CD4-positive, alpha-beta memory T cell (primary cell): ENCODE measurements at regions of chr1 and their contacts with region 1.

Region 1: DNA sequence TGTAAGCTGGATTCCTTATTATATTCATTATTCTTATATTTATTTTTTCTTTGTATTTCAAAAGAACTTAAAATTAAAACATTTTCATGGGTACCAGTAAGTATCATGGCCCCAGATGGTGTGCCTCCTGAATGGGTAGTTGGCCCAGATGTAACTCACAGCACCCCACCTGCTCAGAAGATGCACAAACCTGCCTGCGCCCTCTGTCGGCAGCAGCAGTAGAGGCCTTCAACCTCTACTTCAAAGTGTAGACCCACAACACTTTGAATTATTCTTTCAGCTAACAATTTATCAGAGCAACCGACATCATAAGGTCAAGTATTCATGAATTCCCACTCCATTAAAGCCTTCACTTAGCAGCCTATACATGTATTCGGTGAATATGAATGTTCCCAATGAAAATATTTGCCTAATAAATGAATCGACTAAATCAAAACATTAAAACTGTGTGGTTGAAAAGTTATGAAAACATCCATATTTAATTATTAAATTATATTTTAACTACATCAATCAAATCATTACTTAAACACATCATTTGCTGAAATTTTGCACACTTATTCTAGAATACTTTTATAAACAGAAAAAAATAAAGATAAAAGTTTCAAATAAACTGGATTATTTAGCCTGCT is 25.4 kb downstream of the PIGM start:
- DNase-seq: peak; percentile 59 to 69 (median 62)
- H3K4me3 ChIP-seq: no peak overlapping the region
- H3K4me3 Mint-ChIP-seq: no peak overlapping the region
- H3K27ac ChIP-seq: no peak overlapping the region
- H3K27ac Mint-ChIP-seq: peak overlapping the region in 1 of 7 donors; percentile 13
- H3K4me1 ChIP-seq: no peaks in the 10 kb centered on the region
- H3K4me1 Mint-ChIP-seq: no peaks in the 10 kb centered on the region
- H3K27me3 ChIP-seq: no peaks in the 10 kb centered on the region
- H3K27me3 Mint-ChIP-seq: peaks cover 1 to 5% of the 10 kb centered on the region in 2 donors

Region 2: GRCh38 chr1:159132271-159132881 is 874.0 kb before region 1 on chr1:
- CTCF ChIA-PET with region 1: interaction called, 26 read pairs
- POLR2A ChIA-PET with region 1: no interaction called
- intact Hi-C with region 1: no loop called
- DNase-seq: peak; percentile 41 to 59 (median 49)
- H3K4me3 ChIP-seq: no peak overlapping the region
- H3K4me3 Mint-ChIP-seq: no peak overlapping the region
- H3K27ac ChIP-seq: no peak overlapping the region
- H3K27ac Mint-ChIP-seq: no peak overlapping the region
- H3K4me1 ChIP-seq: no peaks in the 10 kb centered on the region
- H3K4me1 Mint-ChIP-seq: no peaks in the 10 kb centered on the region
- H3K27me3 ChIP-seq: no peaks in the 10 kb centered on the region
- H3K27me3 Mint-ChIP-seq: peaks cover 4 to 12% of the 10 kb centered on the region in 2 donors

Region 3: GRCh38 chr1:159780583-159781582 is 225.5 kb before region 1 on chr1 and contains the start of gene DUSP23:
- CTCF ChIA-PET with region 1: interaction called, 6 read pairs
- POLR2A ChIA-PET with region 1: no interaction called
- intact Hi-C with region 1: loop called (anchors 1 kb)
- DNase-seq: peak; percentile 96 to 97 (median 97)
- H3K4me3 ChIP-seq: peak within 1 kb of the TSS; percentile 39 to 57
- H3K4me3 Mint-ChIP-seq: peak within 1 kb of the TSS; percentile 83 to 93 (median 87)
- H3K27ac ChIP-seq: peak within 1 kb of the TSS; percentile 61
- H3K27ac Mint-ChIP-seq: peak within 1 kb of the TSS; percentile 81 to 96 (median 92)
- H3K4me1 ChIP-seq: peaks cover 16% of the 10 kb centered on the region
- H3K4me1 Mint-ChIP-seq: peaks cover 14 to 55% (median 36%) of the 10 kb centered on the region in 4 donors
- H3K27me3 ChIP-seq: no peaks in the 10 kb centered on the region
- H3K27me3 Mint-ChIP-seq: no peaks in the 10 kb centered on the region
- total RNA-seq, gene DUSP23: 14.5 to 15.7 TPM

Region 4: GRCh38 chr1:159953536-159954515 is 52.6 kb before region 1 on chr1 and contains the start of gene SLAMF9:
- CTCF ChIA-PET with region 1: interaction called, 10 read pairs
- POLR2A ChIA-PET with region 1: no interaction called
- intact Hi-C with region 1: no loop called
- DNase-seq: no peak
- H3K4me3 ChIP-seq: no peak within 1 kb of the TSS
- H3K4me3 Mint-ChIP-seq: no peak within 1 kb of the TSS
- H3K27ac ChIP-seq: no peak within 1 kb of the TSS
- H3K27ac Mint-ChIP-seq: no peak within 1 kb of the TSS
- H3K4me1 ChIP-seq: no peaks in the 10 kb centered on the region
- H3K4me1 Mint-ChIP-seq: no peaks in the 10 kb centered on the region
- H3K27me3 ChIP-seq: no peaks in the 10 kb centered on the region
- H3K27me3 Mint-ChIP-seq: peaks cover 31 to 32% of the 10 kb centered on the region in 2 donors
- total RNA-seq, gene SLAMF9: not detected

Region 5: DNA sequence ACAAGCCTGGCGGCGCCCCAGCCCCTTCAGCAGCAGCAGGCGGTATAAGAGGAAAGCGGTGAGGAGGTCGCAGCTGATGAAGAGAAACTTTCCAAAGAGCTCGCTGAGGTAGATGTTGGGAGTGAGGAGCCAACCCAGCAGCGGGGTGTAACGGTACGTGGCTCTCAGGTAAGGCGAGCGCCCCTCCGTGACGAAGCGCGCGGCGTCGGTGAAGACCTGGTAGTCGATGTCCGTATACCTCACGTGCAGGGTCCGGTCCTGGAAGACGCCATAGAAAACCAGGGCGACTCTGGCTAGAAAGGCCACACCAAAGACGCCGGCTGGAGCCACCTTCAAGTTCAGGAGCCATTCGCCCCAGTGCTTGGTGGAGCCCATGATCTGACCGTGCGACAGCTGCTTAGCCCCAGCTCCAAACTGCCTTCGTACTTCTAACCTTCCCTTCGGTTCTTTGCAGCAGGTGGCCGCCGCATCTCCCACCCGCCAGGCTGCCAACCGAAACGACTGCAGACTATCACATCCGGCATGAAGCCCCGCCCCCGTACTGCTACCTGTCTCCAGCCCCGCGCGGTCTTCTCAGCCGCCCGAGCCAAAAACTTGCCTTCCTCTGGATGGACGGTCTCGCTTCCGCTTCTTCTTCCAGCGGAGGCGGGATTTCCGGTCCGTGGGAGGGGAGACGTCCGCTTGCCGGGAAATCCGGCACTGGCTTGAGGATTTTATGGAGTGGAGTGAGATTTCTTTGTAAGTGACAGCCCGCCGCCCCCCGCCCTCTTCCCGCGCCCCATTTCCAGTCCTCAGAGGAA is 25.1 kb after region 1 on chr1 and contains the start of gene PIGM:
- CTCF ChIA-PET with region 1: interaction called, 38 read pairs
- POLR2A ChIA-PET with region 1: no interaction called
- intact Hi-C with region 1: loop called (anchors 2 kb)
- DNase-seq: peak; percentile 89 to 96 (median 91)
- H3K4me3 ChIP-seq: peak within 1 kb of the TSS; percentile 71 to 79
- H3K4me3 Mint-ChIP-seq: peak within 1 kb of the TSS; percentile 94 to 99 (median 98)
- H3K27ac ChIP-seq: peak within 1 kb of the TSS; percentile 57
- H3K27ac Mint-ChIP-seq: peak within 1 kb of the TSS; percentile 89 to 98 (median 97)
- H3K4me1 ChIP-seq: peaks cover 32% of the 10 kb centered on the region
- H3K4me1 Mint-ChIP-seq: peaks cover 27 to 42% (median 33%) of the 10 kb centered on the region in 4 donors
- H3K27me3 ChIP-seq: no peaks in the 10 kb centered on the region
- H3K27me3 Mint-ChIP-seq: no peaks in the 10 kb centered on the region
- total RNA-seq, gene PIGM: 11.7 to 12.3 TPM

Region 6: GRCh38 chr1:160098852-160099561 is 92.6 kb after region 1 on chr1:
- CTCF ChIA-PET with region 1: no interaction called
- POLR2A ChIA-PET with region 1: no interaction called
- intact Hi-C with region 1: no loop called
- DNase-seq: peak; percentile 95 to 98 (median 95)
- H3K4me3 ChIP-seq: peak overlapping the region; percentile 74
- H3K4me3 Mint-ChIP-seq: peak overlapping the region; percentile 78 to 87 (median 82)
- H3K27ac ChIP-seq: peak overlapping the region; percentile 96
- H3K27ac Mint-ChIP-seq: peak overlapping the region; percentile 93 to 98 (median 97)
- H3K4me1 ChIP-seq: peaks cover 55% of the 10 kb centered on the region
- H3K4me1 Mint-ChIP-seq: peaks cover 24 to 63% (median 46%) of the 10 kb centered on the region in 4 donors
- H3K27me3 ChIP-seq: no peaks in the 10 kb centered on the region
- H3K27me3 Mint-ChIP-seq: peaks cover 0 to 2% of the 10 kb centered on the region in 2 donors